ENCODE measurements at regions of chr11 and their contacts with region 1.

Region 1: GRCh38 chr11:118171269-118172062 is 5.0 kb downstream of the SCN2B start:
- DNase-seq: peak; percentile 80 to 90 (median 87)
- ATAC-seq: peak; percentile 94
- H3K4me3 ChIP-seq: no peak overlapping the region
- H3K27ac ChIP-seq: no peak overlapping the region
- H3K4me1 ChIP-seq: peaks cover 0 to 8% of the 10 kb centered on the region in 2 experiments; a peak in 2 of 5 replicates
- H3K27me3 ChIP-seq: peaks cover 33 to 83% of the 10 kb centered on the region in 2 experiments
- CTCF ChIP-seq: peak; percentile 85 to 88 (median 87)
- EP300 ChIP-seq: no peak
- POLR2A ChIP-seq: no peak
- RAD21 ChIP-seq: peak; percentile 78 to 88

Region 2: GRCh38 chr11:117817368-117818040 is 354.0 kb before region 1 on chr11:
- CTCF ChIA-PET with region 1: interaction called, 4 read pairs
- POLR2A ChIA-PET with region 1: interaction called, 3 read pairs
- in situ Hi-C with region 1: no loop called
- intact Hi-C with region 1: loop called (anchors 2 kb)
- DNase-seq: peak; percentile 65 to 78 (median 76)
- ATAC-seq: peak; percentile 84
- H3K4me3 ChIP-seq: no peak overlapping the region
- H3K27ac ChIP-seq: no peak overlapping the region
- H3K4me1 ChIP-seq: peaks cover 0 to 30% of the 10 kb centered on the region in 2 experiments; a peak in 3 of 5 replicates
- H3K27me3 ChIP-seq: peaks cover 3 to 13% of the 10 kb centered on the region in 2 experiments; a peak in 3 of 5 replicates
- CTCF ChIP-seq: peak; percentile 86 to 99 (median 97)
- EP300 ChIP-seq: no peak
- POLR2A ChIP-seq: no peak
- RAD21 ChIP-seq: peak; percentile 75 to 88

Region 3: GRCh38 chr11:118145285-118146227 is 25.9 kb before region 1 on chr11:
- CTCF ChIA-PET with region 1: interaction called, 17 read pairs
- POLR2A ChIA-PET with region 1: interaction called, 5 read pairs
- in situ Hi-C with region 1: no loop called
- intact Hi-C with region 1: loop called (anchors 1 kb)
- DNase-seq: peak; percentile 87 to 96 (median 94)
- ATAC-seq: peak; percentile 97
- H3K4me3 ChIP-seq: peak overlapping the region; percentile 46
- H3K27ac ChIP-seq: no peak overlapping the region
- H3K4me1 ChIP-seq: peaks cover 0 to 11% of the 10 kb centered on the region in 2 experiments; a peak in 3 of 5 replicates
- H3K27me3 ChIP-seq: peaks cover 7 to 62% of the 10 kb centered on the region in 2 experiments; a peak in 4 of 5 replicates
- CTCF ChIP-seq: peak; percentile 86 to 93 (median 92)
- EP300 ChIP-seq: no peak
- POLR2A ChIP-seq: no peak
- RAD21 ChIP-seq: peak; percentile 94 to 96

Region 4: GRCh38 chr11:118290923-118291322 is 119.5 kb after region 1 on chr11:
- CTCF ChIA-PET with region 1: no interaction called
- POLR2A ChIA-PET with region 1: no interaction called
- in situ Hi-C with region 1: no loop called
- intact Hi-C with region 1: no loop called
- DNase-seq: peak in 1 of 4 experiments; percentile 30
- ATAC-seq: peak; percentile 68
- H3K4me3 ChIP-seq: no peak overlapping the region
- H3K27ac ChIP-seq: no peak overlapping the region
- H3K4me1 ChIP-seq: no peaks in the 10 kb centered on the region; a peak in 1 of 5 replicates
- H3K27me3 ChIP-seq: peaks cover 0 to 8% of the 10 kb centered on the region in 2 experiments; a peak in 2 of 5 replicates
- CTCF ChIP-seq: peak; percentile 41 to 65 (median 46); a peak in 4 of 6 replicates
- EP300 ChIP-seq: no peak
- POLR2A ChIP-seq: no peak
- RAD21 ChIP-seq: peak; percentile 91 to 92

Measured in K562 (cell line).